BJ (cell line): ENCODE measurements at regions of chr1 and their contacts with region 1.

Region 1: DNA sequence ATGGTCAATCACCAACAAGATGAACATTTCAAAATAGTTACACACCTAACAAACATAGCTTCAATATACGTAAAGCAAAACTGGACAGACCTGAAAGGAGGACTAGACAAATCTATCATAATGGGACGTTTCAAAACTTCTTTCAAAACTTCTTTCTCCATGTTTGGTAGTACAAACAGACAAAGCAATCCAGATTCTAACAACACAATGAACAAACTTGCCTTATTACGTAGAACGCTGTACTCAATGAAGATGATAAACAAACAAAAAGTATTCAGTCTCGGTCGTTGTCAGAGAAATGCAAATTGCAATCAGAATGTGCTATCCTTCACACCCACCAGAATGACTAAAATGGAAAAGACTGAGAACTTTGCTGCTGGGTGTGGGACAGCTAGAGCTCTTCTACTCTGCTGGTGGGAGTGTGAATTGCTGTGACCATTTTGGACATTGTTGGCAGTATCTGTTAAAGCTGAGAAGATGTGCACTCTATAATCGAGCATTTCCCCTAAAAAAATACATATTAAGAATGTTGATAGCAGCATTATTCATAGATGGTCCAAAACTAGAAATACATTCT is 111.3 kb downstream of the PEX14 start:
- DNase-seq: no peak
- H3K4me3 ChIP-seq: no peak overlapping the region
- H3K27me3 ChIP-seq: no peaks in the 10 kb centered on the region
- CTCF ChIP-seq: no peak

Region 2: GRCh38 chr1:10597492-10598388 is 11.7 kb after region 1 on chr1:
- CTCF ChIA-PET with region 1: interaction called, 4 read pairs
- POLR2A ChIA-PET with region 1: interaction called, 18 read pairs
- DNase-seq: no peak
- H3K4me3 ChIP-seq: no peak overlapping the region
- H3K27me3 ChIP-seq: no peaks in the 10 kb centered on the region
- CTCF ChIP-seq: no peak